ENCODE measurements at regions of chrX and their contacts with region 1.

Region 1: GRCh38 chrX:124346117-124346876 is at the start of gene SH2D1A:
- DNase-seq: peak; percentile 46
- ATAC-seq: peak; percentile 66
- H3K4me3 Mint-ChIP-seq: peak within 1 kb of the TSS; percentile 95
- H3K27ac Mint-ChIP-seq: peak within 1 kb of the TSS; percentile 98
- H3K4me1 Mint-ChIP-seq: peaks cover 45% of the 10 kb centered on the region
- H3K27me3 Mint-ChIP-seq: no peaks in the 10 kb centered on the region
- total RNA-seq, gene SH2D1A: 45.8 to 51.2 TPM

Region 2: GRCh38 chrX:124217304-124218251 is 128.7 kb before region 1 on chrX:
- POLR2A ChIA-PET with region 1: interaction called, 18 read pairs
- DNase-seq: peak; percentile 43
- ATAC-seq: peak; percentile 90
- H3K4me3 Mint-ChIP-seq: peak overlapping the region; percentile 80
- H3K27ac Mint-ChIP-seq: peak overlapping the region; percentile 88
- H3K4me1 Mint-ChIP-seq: peaks cover 63% of the 10 kb centered on the region
- H3K27me3 Mint-ChIP-seq: no peaks in the 10 kb centered on the region

Region 3: DNA sequence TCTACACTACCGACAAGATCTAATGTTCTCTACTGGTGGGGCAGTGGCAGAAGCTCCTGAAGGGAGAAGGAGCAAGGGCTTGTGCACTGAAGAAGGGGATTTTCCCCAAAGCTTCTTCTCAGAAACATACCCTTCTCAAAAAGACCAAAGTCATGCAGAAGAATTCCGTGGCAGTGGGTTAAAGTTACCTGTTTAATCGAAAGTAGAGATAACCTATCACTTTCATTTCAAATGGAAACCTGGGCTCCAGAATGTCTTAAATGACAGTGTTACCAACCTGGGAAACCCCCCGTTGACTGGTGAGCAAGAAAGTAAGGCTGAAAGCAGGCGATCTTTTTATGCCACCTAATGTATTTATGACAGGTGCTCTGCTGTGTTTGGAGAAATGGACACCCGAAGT is 106.4 kb before region 1 on chrX:
- POLR2A ChIA-PET with region 1: interaction called, 14 read pairs
- DNase-seq: no peak
- ATAC-seq: peak; percentile 80
- H3K4me3 Mint-ChIP-seq: peak overlapping the region; percentile 68
- H3K27ac Mint-ChIP-seq: peak overlapping the region; percentile 64
- H3K4me1 Mint-ChIP-seq: peaks cover 21% of the 10 kb centered on the region
- H3K27me3 Mint-ChIP-seq: no peaks in the 10 kb centered on the region

Region 4: DNA sequence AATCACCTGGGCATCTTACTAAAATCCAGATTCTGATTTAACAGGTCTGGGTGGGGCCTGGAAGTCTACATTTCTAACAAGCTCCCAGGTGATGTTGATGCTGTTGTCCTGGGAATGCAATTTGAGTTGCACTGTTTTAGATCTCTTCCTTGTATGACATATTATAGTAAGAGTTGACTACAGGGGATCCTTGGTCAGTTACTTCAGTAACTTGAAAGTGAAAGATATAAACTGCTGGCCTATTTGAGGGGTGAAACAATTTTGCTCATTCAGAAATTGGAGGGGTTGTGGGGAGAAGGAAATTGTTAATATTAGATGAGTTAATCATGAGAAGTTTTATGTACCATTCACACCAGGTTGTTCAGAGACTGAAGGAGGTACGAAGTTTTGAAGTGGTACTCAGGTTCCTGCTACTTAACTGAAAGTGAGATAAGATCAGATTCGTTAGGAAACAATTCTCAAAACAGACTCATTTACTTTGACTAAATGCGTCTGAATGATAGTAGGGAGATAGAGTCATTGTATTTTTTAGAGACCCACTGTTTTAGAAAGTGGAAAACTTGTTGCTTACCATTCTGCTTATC is 12.6 kb after region 1 on chrX:
- POLR2A ChIA-PET with region 1: interaction called, 10 read pairs
- DNase-seq: no peak
- ATAC-seq: peak; percentile 68
- H3K4me3 Mint-ChIP-seq: peak overlapping the region; percentile 84
- H3K27ac Mint-ChIP-seq: peak overlapping the region; percentile 94
- H3K4me1 Mint-ChIP-seq: peaks cover 54% of the 10 kb centered on the region
- H3K27me3 Mint-ChIP-seq: no peaks in the 10 kb centered on the region

Measured in activated naive CD8-positive, alpha-beta T cell treated with anti-CD3 and anti-CD28 coated beads, Interleukin-2, amount 10 ng/mL, durations not matched to agents 7 days and 5 days (primary cell).